ENCODE measurements at regions of chr3 and their contacts with region 1.

Region 1: GRCh38 chr3:11379233-11379823 is 107.1 kb downstream of the ATG7 start:
- DNase-seq: peak; percentile 25 to 46
- ATAC-seq: peak; percentile 74 to 86; a peak in 5 of 6 replicates
- H3K4me3 ChIP-seq: no peak overlapping the region
- H3K27ac ChIP-seq: no peak overlapping the region
- H3K4me1 ChIP-seq: no peaks in the 10 kb centered on the region
- CTCF ChIP-seq: peak; percentile 80
- EP300 ChIP-seq: no peak
- POLR2A ChIP-seq: no peak
- RAD21 ChIP-seq: peak; percentile 83 to 88

Region 2: DNA sequence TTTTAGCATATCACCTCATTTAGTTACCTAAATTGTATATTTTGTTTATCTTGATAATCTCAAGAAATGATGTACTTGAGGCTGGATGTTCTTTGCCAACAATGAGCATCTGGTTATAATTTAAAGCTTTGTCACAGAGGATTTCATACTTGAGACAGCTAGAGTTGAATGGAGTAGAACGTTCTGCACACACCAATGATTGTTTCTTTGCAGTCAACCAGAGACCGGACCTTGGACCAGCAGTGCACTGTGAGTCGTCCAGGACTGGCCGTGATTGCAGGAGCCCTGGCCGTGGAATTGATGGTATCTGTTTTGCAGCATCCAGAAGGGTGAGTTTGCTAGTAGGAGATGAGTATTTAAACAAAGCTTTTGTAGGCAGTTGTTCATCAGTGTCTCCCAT is 16.7 kb before region 1 on chr3:
- CTCF ChIA-PET with region 1: interaction called, 13 read pairs
- POLR2A ChIA-PET with region 1: no interaction called
- DNase-seq: no peak
- ATAC-seq: no peak
- H3K4me3 ChIP-seq: no peak overlapping the region
- H3K27ac ChIP-seq: no peak overlapping the region
- H3K4me1 ChIP-seq: peaks cover 6% of the 10 kb centered on the region; the same call in 1 of the 3 replicates
- CTCF ChIP-seq: no peak
- EP300 ChIP-seq: no peak
- POLR2A ChIP-seq: no peak
- RAD21 ChIP-seq: no peak

Region 3: DNA sequence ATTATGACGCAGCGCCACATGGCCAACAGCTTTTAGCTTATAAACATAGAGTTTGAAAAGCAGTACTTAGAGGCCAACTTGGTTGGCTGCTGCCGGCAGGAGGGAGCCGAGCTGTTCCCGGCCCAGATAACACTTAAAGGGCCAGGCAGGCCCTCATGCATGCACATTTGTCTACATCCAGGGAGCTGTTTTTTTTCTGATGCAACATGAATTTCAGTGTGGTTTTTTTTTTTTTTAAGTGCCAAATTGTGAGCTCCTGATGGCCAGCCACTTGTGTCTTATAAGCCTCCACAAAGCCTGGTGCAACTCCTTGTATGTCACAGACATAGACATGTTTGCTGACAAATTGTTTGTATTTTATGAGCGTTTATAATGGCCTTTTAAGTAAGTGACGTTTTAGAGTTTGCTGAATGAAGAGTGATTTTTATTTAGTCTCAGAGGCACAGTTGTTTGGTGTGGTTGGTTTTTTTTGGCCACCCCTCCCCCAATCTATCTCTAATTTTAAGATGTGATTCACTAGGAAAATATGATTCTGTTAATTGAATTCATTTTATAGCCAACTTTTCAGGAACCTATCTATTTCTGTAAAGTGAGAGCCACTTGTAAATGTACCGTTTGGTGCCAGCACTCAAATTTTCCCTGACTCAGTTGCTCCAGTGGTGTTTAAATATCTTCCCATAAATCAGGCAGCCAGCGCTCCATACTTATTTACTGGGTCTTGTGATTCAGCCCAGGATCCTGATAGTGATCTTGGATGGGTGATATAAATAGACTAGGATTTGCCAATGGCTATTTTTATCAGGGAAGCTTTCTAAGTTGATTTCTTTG is 130.1 kb after region 1 on chr3:
- CTCF ChIA-PET with region 1: no interaction called
- POLR2A ChIA-PET with region 1: no interaction called
- DNase-seq: peak in 1 of 2 experiments; percentile 33
- ATAC-seq: peak; percentile 69 to 83; a peak in 5 of 6 replicates
- H3K4me3 ChIP-seq: no peak overlapping the region
- H3K27ac ChIP-seq: peak overlapping the region in 1 of 2 experiments; percentile 54; a peak in 2 of 6 replicates
- H3K4me1 ChIP-seq: peaks cover 20% of the 10 kb centered on the region
- CTCF ChIP-seq: no peak
- EP300 ChIP-seq: no peak
- POLR2A ChIP-seq: no peak
- RAD21 ChIP-seq: no peak

Region 4: DNA sequence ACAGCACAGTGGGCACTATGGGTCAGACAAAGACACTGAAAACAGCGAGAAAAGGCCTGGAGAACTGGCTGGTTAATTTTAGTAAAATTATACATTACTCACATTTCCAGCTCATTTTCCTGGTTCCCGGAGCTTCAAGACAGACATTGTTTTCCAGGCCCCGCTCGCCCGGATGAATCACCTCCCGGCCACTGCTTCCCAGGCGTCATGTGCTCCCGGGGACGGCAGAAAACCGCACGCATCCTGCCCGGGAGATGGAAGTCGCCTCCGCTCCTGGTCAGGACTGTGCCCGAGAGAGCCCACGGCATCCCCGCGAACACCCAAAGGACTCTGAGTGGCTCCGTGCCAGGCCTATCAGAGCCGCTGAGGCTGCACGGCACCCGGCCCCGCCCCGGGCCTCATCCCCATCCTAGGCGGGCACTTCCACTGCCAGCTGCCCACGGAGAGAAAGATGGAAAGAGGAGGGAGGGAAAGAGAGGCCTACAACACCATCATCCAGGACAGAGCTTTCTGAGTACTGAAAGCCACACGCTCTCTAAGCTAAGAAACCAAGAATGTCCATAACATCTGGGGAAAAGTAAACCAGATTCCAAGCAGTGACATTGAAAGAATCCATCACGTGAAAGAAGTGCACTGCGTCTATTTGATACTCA is 189.3 kb after region 1 on chr3:
- CTCF ChIA-PET with region 1: interaction called, 11 read pairs
- POLR2A ChIA-PET with region 1: no interaction called
- DNase-seq: peak; percentile 52 to 78
- ATAC-seq: peak; percentile 79 to 85
- H3K4me3 ChIP-seq: peak overlapping the region; percentile 26
- H3K27ac ChIP-seq: peak overlapping the region; percentile 87 to 93
- H3K4me1 ChIP-seq: peaks cover 22% of the 10 kb centered on the region
- CTCF ChIP-seq: no peak
- EP300 ChIP-seq: no peak
- POLR2A ChIP-seq: no peak
- RAD21 ChIP-seq: 0 out of 5 replicates have a peak, but pooled peaks of 1 of the 2 experiments have one; percentile 10

Region 5: GRCh38 chr3:11651900-11652299 is 272.6 kb after region 1 on chr3:
- CTCF ChIA-PET with region 1: interaction called, 132 read pairs
- POLR2A ChIA-PET with region 1: interaction called, 3 read pairs
- DNase-seq: peak in 1 of 2 experiments; percentile 44
- ATAC-seq: no peak
- H3K4me3 ChIP-seq: no peak overlapping the region
- H3K27ac ChIP-seq: no peak overlapping the region
- H3K4me1 ChIP-seq: no peaks in the 10 kb centered on the region
- CTCF ChIP-seq: peak; percentile 73
- EP300 ChIP-seq: no peak
- POLR2A ChIP-seq: no peak
- RAD21 ChIP-seq: peak; percentile 75 to 79

Region 6: DNA sequence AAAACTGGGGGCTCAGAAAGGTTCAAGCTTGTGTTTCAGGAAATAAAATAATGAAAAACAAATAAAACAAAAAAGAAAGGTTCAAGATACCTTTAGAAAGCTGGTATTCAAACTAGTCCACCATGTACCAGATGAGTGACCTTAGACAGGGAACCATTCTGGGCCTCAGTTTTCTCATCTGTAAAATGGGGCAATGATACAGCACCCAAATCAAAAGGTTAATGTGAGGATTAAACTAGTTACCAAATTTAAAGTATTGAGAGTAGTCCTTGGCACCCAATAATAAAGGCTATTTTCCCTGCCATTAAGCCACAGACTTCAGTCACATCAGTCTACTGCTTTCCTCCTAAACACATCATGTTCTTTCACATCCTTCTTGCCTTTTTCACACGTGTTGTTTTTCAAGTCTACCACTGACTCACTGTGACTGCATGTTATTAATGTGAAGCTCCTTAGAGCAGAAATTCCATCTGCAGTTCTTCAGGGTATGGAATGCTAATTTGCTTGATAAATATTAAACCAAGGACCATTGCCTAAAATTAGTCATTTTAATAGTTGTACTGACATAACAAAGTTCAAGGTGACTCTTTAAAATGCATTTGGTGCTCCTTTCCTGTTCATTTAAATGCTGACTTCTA is 447.4 kb after region 1 on chr3:
- CTCF ChIA-PET with region 1: interaction called, 17 read pairs
- POLR2A ChIA-PET with region 1: no interaction called
- DNase-seq: no peak
- ATAC-seq: no peak
- H3K4me3 ChIP-seq: no peak overlapping the region
- H3K27ac ChIP-seq: no peak overlapping the region
- H3K4me1 ChIP-seq: no peaks in the 10 kb centered on the region
- CTCF ChIP-seq: no peak
- EP300 ChIP-seq: no peak
- POLR2A ChIP-seq: no peak
- RAD21 ChIP-seq: no peak

Measured in A549 (cell line).